Esophagus muscularis mucosa (tissue), 4 donors: ENCODE measurements at regions of chr5 and their contacts with region 1.

Region 1: GRCh38 chr5:81425569-81425968 is 31.6 kb upstream of the ACOT12 start:
- DNase-seq: no peak
- H3K4me3 ChIP-seq: no peak overlapping the region
- H3K27ac ChIP-seq: peak overlapping the region in 3 of 4 donors; percentile 25 to 43 (median 28)
- H3K4me1 ChIP-seq: peaks cover 15 to 27% (median 20%) of the 10 kb centered on the region in 4 donors
- H3K27me3 ChIP-seq: no peaks in the 10 kb centered on the region
- CTCF ChIP-seq: peak; percentile 62 to 64 (median 64)
- EP300 ChIP-seq: no peak
- POLR2A ChIP-seq: no peak

Region 2: GRCh38 chr5:80569961-80570786 is 855.4 kb before region 1 on chr5 and contains the start of gene ANKRD34B:
- intact Hi-C with region 1: no loop called
- DNase-seq: no peak
- H3K4me3 ChIP-seq: peak within 1 kb of the TSS; percentile 34 to 44 (median 39)
- H3K27ac ChIP-seq: no peak within 1 kb of the TSS
- H3K4me1 ChIP-seq: peaks cover 7 to 18% (median 17%) of the 10 kb centered on the region in 4 donors
- H3K27me3 ChIP-seq: peaks cover 0 to 75% (median 19%) of the 10 kb centered on the region in 4 donors
- CTCF ChIP-seq: no peak
- EP300 ChIP-seq: no peak
- POLR2A ChIP-seq: no peak
- total RNA-seq, gene ANKRD34B: under 0.01 TPM in 1 of 4 donors, not detected in the others

Region 3: GRCh38 chr5:81506900-81507588 is 81.5 kb after region 1 on chr5:
- intact Hi-C with region 1: loop called (anchors 5 kb)
- DNase-seq: no peak
- H3K4me3 ChIP-seq: no peak overlapping the region
- H3K27ac ChIP-seq: peak overlapping the region in 3 of 4 donors; percentile 8 to 34 (median 29)
- H3K4me1 ChIP-seq: peaks cover 10 to 25% (median 19%) of the 10 kb centered on the region in 4 donors
- H3K27me3 ChIP-seq: no peaks in the 10 kb centered on the region
- CTCF ChIP-seq: peak; percentile 88 to 94 (median 90)
- EP300 ChIP-seq: no peak
- POLR2A ChIP-seq: no peak

Region 4: GRCh38 chr5:81971712-81972495 is 546.3 kb after region 1 on chr5 and contains the start of gene ATG10:
- intact Hi-C with region 1: loop called (anchors 10 kb)
- DNase-seq: peak; percentile 97
- H3K4me3 ChIP-seq: peak within 1 kb of the TSS; percentile 70 to 87 (median 82)
- H3K27ac ChIP-seq: peak within 1 kb of the TSS; percentile 98 to 99 (median 98)
- H3K4me1 ChIP-seq: peaks cover 0 to 16% (median 12%) of the 10 kb centered on the region in 4 donors
- H3K27me3 ChIP-seq: no peaks in the 10 kb centered on the region
- CTCF ChIP-seq: no peak
- EP300 ChIP-seq: no peak
- POLR2A ChIP-seq: peak; percentile 91
- total RNA-seq, gene ATG10: 5.2 to 9.1 (median 7.3) TPM

Region 5: DNA sequence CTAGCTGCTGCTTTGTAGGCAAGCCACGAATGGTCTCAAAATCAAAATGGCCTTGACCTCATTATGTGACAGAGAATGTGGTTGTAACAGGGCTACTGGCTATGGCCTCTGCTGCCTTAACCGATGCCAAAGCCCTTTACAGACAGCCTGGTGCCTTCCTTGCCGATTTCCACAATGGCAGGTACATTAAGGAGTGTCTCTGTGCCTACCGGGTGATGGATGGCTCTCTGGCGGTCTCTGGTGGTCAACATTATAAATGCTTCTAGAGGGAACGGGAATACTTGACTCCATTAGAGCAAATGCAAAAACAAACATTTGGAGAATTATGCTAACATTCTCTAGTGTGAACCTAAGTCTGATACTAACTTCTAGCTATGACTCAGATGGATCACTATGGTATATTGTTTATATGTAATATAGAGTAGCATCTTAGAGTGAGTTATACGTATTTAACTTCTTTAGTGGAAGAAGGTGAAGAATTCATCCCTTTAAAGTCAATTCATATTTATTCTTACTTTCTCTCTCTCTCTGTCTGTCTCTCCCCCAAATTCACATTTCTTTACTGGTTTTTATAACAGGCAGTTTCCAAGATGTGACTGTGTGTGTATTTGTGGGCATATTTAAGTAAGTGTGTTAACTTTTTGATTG is 800.1 kb after region 1 on chr5:
- intact Hi-C with region 1: loop called (anchors 5 kb)
- DNase-seq: no peak
- H3K4me3 ChIP-seq: no peak overlapping the region
- H3K27ac ChIP-seq: no peak overlapping the region
- H3K4me1 ChIP-seq: peaks cover 0 to 5% (median 2%) of the 10 kb centered on the region in 4 donors
- H3K27me3 ChIP-seq: no peaks in the 10 kb centered on the region
- CTCF ChIP-seq: peak; percentile 69 to 89 (median 73)
- EP300 ChIP-seq: no peak
- POLR2A ChIP-seq: no peak